ENCODE measurements at regions of chr17 and their contacts with region 1.

Region 1: GRCh38 chr17:49230636-49231562 is at the start of gene PHOSPHO1:
- DNase-seq: peak; percentile 94
- ATAC-seq: peak; percentile 89
- H3K4me3 Mint-ChIP-seq: peak within 1 kb of the TSS; percentile 85
- H3K27ac Mint-ChIP-seq: no peak within 1 kb of the TSS
- H3K4me1 Mint-ChIP-seq: peaks cover 25% of the 10 kb centered on the region
- H3K27me3 Mint-ChIP-seq: peaks cover 70% of the 10 kb centered on the region
- CTCF ChIP-seq: no peak
- total RNA-seq, gene PHOSPHO1: 0.81 to 1.1 TPM (median 0.85 TPM) in 3 replicates

Region 2: GRCh38 chr17:49191917-49192741 is 38.8 kb before region 1 on chr17:
- CTCF ChIA-PET with region 1: interaction called, 26 read pairs
- POLR2A ChIA-PET with region 1: no interaction called
- DNase-seq: peak; percentile 91
- ATAC-seq: peak; percentile 68
- H3K4me3 Mint-ChIP-seq: peak overlapping the region; percentile 96
- H3K27ac Mint-ChIP-seq: peak overlapping the region; percentile 98
- H3K4me1 Mint-ChIP-seq: peaks cover 10% of the 10 kb centered on the region
- H3K27me3 Mint-ChIP-seq: no peaks in the 10 kb centered on the region; the same call in 1 of the 2 replicates
- CTCF ChIP-seq: no peak

Region 3: DNA sequence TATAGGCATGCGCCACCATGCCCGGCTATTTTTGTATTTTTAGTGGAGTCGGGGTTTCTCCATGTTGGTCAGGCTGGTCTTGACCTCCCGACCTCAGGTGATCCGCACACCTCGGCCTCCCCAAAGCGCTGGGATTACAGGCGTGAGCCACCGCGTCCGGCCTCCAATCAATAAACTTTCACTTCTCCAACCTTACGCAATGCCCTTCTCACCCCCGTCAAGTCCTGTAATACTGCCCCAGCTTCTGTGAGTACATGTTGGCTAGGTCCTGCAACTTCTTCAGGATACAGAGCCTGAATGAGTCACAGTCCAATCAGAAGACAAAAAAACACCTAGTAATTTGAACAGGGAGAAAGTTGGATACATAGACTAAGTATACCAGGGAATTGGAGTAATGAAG is 46.7 kb after region 1 on chr17:
- CTCF ChIA-PET with region 1: interaction called, 11 read pairs
- POLR2A ChIA-PET with region 1: no interaction called
- DNase-seq: no peak
- ATAC-seq: no peak
- H3K4me3 Mint-ChIP-seq: no peak overlapping the region
- H3K27ac Mint-ChIP-seq: peak overlapping the region; percentile 5; the same call in 1 of the 2 replicates
- H3K4me1 Mint-ChIP-seq: peaks cover 23% of the 10 kb centered on the region
- H3K27me3 Mint-ChIP-seq: no peaks in the 10 kb centered on the region; the same call in 1 of the 2 replicates
- CTCF ChIP-seq: no peak

Region 4: DNA sequence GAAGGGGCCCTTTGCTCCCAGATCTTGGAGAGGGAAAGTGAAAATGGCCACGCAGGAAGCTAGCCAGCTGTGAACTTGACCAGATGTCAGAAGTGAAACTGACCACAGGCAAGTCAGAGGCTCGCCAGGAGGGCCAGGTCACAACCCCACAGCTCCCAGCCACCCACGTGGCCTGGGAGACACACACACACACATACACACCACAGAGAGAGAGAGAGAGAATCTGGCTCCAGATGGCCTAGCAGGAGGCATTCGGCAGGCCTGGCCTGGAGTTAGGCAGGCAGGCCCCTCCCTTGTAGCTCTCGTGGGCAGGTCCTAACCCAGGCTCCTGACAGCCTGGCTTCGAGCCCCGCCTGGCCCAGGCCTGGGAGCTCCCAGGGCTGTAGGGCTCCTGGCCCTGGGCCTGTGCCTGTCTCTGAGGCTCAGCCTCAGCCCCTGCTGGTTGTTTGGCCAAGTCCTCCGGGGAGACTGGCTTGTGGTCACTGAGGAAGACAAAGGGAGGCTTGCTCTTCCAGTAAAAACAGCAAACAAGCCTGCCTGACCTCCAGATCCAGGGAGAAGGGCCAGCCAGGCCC is 284.4 kb after region 1 on chr17:
- CTCF ChIA-PET with region 1: no interaction called
- POLR2A ChIA-PET with region 1: no interaction called
- DNase-seq: peak; percentile 73
- ATAC-seq: peak; percentile 92
- H3K4me3 Mint-ChIP-seq: no peak overlapping the region
- H3K27ac Mint-ChIP-seq: peak overlapping the region; percentile 75
- H3K4me1 Mint-ChIP-seq: peaks cover 53% of the 10 kb centered on the region
- H3K27me3 Mint-ChIP-seq: no peaks in the 10 kb centered on the region; the same call in 1 of the 2 replicates
- CTCF ChIP-seq: no peak